ENCODE measurements at regions of chr2 and their contacts with region 1.

Region 1: DNA sequence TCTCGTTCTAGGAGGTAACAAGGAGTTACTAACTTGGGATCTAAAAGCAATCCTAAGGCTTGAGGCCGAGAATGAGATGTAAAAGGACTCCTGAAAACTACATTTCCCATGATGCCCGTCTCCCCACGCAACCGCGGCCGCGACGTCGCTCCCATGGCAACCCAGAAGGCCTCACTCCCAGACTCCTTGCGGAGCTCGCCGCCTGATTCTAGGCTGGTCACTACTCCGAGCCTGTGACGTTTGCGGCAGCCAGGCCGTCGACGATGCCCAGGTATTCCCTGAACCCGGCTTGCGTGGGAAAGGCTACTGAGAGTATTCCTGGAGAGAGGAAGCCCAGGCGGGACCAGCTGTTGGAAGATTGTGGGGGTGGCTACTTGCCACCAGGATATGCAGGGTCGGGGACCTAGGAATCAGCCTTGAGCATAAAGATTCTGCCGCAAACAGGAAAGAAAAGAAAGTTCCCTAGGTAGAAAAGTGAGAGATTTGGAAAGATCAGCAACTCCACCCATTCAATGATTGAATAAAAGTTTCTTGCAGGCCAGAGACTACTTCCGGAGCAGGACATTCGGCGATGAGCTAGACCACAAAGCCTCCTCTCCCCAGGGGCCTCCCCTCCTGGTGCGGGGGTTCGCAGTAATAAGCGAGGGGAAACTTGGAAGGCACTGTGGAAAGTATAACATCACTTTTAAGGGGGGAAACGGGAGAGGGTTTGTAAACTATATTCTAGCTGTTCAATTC is at the start of gene DYNC2LI1:
- DNase-seq: peak; percentile 93
- H3K4me3 Mint-ChIP-seq: peak within 1 kb of the TSS; percentile 91
- H3K27ac Mint-ChIP-seq: peak within 1 kb of the TSS; percentile 95
- H3K4me1 Mint-ChIP-seq: no peaks in the 10 kb centered on the region
- H3K27me3 Mint-ChIP-seq: no peaks in the 10 kb centered on the region
- CTCF ChIP-seq: no peak
- total RNA-seq, gene DYNC2LI1: 13.0 and 16.6 TPM in 2 replicates

Region 2: GRCh38 chr2:43611987-43612894 is 161.8 kb before region 1 on chr2:
- CTCF ChIA-PET with region 1: interaction called, 6 read pairs
- POLR2A ChIA-PET with region 1: no interaction called
- intact Hi-C with region 1: loop called (anchors 5 kb)
- DNase-seq: peak; percentile 82
- H3K4me3 Mint-ChIP-seq: no peak overlapping the region
- H3K27ac Mint-ChIP-seq: no peak overlapping the region
- H3K4me1 Mint-ChIP-seq: peaks cover 6% of the 10 kb centered on the region
- H3K27me3 Mint-ChIP-seq: no peaks in the 10 kb centered on the region
- CTCF ChIP-seq: peak; percentile 68

Region 3: GRCh38 chr2:43759195-43759594 is 14.8 kb before region 1 on chr2:
- CTCF ChIA-PET with region 1: no interaction called
- POLR2A ChIA-PET with region 1: interaction called, 10 read pairs
- intact Hi-C with region 1: no loop called
- DNase-seq: peak; percentile 41
- H3K4me3 Mint-ChIP-seq: no peak overlapping the region
- H3K27ac Mint-ChIP-seq: peak overlapping the region; percentile 9
- H3K4me1 Mint-ChIP-seq: peaks cover 14% of the 10 kb centered on the region
- H3K27me3 Mint-ChIP-seq: no peaks in the 10 kb centered on the region
- CTCF ChIP-seq: no peak

Region 4: DNA sequence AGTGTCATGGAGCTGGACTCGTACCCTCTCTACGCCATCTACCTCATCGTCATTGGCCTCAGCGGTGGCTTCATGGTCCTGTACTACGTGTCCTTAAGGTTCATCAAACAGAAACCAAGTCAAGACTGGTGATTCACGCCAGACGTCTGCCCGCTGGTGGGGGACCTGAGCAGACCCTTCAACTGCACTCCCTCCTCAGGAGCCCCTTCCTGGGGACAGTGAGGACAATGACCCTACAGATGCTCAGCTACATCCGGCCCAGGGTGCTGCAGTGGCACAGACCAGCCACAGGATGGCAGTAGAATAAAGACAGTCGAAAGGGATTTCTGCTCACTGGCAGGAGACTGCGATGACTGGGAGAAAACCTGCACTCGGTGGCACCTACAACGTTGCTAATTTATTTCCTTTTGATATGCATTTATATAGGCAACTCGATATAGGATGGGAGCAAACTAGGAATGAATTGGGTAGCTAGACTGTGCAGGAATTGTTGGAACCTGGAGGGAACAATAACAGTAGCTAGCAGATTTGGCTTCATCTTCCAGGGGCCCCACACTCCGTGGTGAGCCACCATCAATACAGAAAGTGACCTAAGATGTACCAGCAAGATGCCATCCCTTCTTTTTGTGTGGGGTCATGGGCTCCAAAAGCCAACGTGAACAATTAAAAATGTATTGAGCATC is 103.9 kb after region 1 on chr2:
- CTCF ChIA-PET with region 1: no interaction called
- POLR2A ChIA-PET with region 1: no interaction called
- intact Hi-C with region 1: no loop called
- DNase-seq: peak; percentile 69
- H3K4me3 Mint-ChIP-seq: no peak overlapping the region
- H3K27ac Mint-ChIP-seq: no peak overlapping the region
- H3K4me1 Mint-ChIP-seq: peaks cover 6% of the 10 kb centered on the region
- H3K27me3 Mint-ChIP-seq: peaks cover under 1% of the 10 kb centered on the region
- CTCF ChIP-seq: peak; percentile 82